ENCODE measurements at regions of chr7 and their contacts with region 1.

Region 1: GRCh38 chr7:15720849-15721471 is 34.5 kb upstream of the MEOX2 start:
- DNase-seq: peak; percentile 27
- ATAC-seq: no peak
- H3K4me3 Mint-ChIP-seq: no peak overlapping the region
- H3K27ac Mint-ChIP-seq: no peak overlapping the region
- H3K4me1 Mint-ChIP-seq: peaks cover 26% of the 10 kb centered on the region
- H3K27me3 Mint-ChIP-seq: no peaks in the 10 kb centered on the region
- CTCF ChIP-seq: peak; percentile 66; the same call in 1 of the 2 replicates

Region 2: DNA sequence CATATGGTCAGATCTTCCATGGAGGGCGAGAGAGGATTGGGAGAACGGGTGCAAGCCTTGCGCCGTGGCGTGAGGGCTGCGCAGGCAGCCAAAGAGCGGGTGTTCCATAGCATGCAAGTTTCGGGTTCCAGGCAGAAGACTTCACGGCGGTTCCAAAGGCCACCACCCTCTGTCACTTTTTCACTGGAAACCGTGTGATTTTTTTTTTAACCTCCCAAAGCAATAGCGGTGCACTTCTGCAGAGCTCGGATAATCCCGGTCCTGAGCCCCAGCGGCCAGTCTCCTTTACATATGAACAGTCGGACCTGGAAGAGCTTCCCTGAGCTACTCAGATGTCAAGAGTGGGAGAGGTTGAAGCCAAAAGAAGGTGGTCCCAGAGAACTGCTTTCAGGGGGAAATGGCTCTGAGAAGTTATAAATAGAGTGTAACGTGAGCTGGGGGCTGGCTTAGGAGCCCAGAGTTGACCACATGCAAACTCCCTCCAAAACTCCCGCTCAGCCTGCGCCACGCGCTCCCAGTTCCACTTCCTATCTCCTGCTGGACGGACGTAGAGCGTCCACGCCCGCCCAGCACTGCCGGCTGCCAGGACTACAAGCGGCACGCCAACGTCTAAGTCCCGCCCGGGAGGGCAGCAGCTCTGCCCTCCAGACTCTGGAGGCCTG is 34.5 kb before region 1 on chr7 and contains the start of gene MEOX2:
- CTCF ChIA-PET with region 1: interaction called, 21 read pairs
- POLR2A ChIA-PET with region 1: no interaction called
- DNase-seq: peak; percentile 43
- ATAC-seq: peak; percentile 52
- H3K4me3 Mint-ChIP-seq: peak within 1 kb of the TSS; percentile 81
- H3K27ac Mint-ChIP-seq: no peak within 1 kb of the TSS
- H3K4me1 Mint-ChIP-seq: peaks cover 42% of the 10 kb centered on the region
- H3K27me3 Mint-ChIP-seq: peaks cover 53% of the 10 kb centered on the region
- CTCF ChIP-seq: no peak
- total RNA-seq, gene MEOX2: 0.07 to 0.16 TPM (median 0.14 TPM) in 3 replicates

Region 3: GRCh38 chr7:15737601-15738000 is 16.6 kb after region 1 on chr7:
- CTCF ChIA-PET with region 1: interaction called, 11 read pairs
- POLR2A ChIA-PET with region 1: no interaction called
- DNase-seq: no peak
- ATAC-seq: peak; percentile 43; the same call in 1 of the 2 replicates
- H3K4me3 Mint-ChIP-seq: no peak overlapping the region
- H3K27ac Mint-ChIP-seq: no peak overlapping the region
- H3K4me1 Mint-ChIP-seq: no peaks in the 10 kb centered on the region
- H3K27me3 Mint-ChIP-seq: no peaks in the 10 kb centered on the region
- CTCF ChIP-seq: no peak

Region 4: GRCh38 chr7:15801551-15801950 is 80.6 kb after region 1 on chr7:
- CTCF ChIA-PET with region 1: no interaction called
- POLR2A ChIA-PET with region 1: no interaction called
- DNase-seq: no peak
- ATAC-seq: peak; percentile 52
- H3K4me3 Mint-ChIP-seq: no peak overlapping the region
- H3K27ac Mint-ChIP-seq: no peak overlapping the region
- H3K4me1 Mint-ChIP-seq: peaks cover 10% of the 10 kb centered on the region
- H3K27me3 Mint-ChIP-seq: no peaks in the 10 kb centered on the region
- CTCF ChIP-seq: no peak